ENCODE measurements at regions of chr16 and their contacts with region 1.

Region 1: GRCh38 chr16:88452482-88453216 is 431 bp upstream of the ZFPM1 start:
- DNase-seq: peak; percentile 91 to 95 (median 94)
- H3K4me3 ChIP-seq: peak overlapping the region; percentile 38 to 83 (median 65)
- H3K4me3 Mint-ChIP-seq: peak overlapping the region; percentile 79 to 87
- H3K27ac ChIP-seq: peak overlapping the region; percentile 58 to 75
- H3K27ac Mint-ChIP-seq: peak overlapping the region; percentile 57 to 94 (median 82)
- H3K4me1 ChIP-seq: peaks cover 46 to 60% of the 10 kb centered on the region in 2 donors
- H3K4me1 Mint-ChIP-seq: peaks cover 44% of the 10 kb centered on the region
- H3K27me3 ChIP-seq: peaks cover 27 to 59% of the 10 kb centered on the region in 2 donors
- H3K27me3 Mint-ChIP-seq: peaks cover 52 to 86% (median 57%) of the 10 kb centered on the region in 3 donors
- CTCF ChIP-seq: no peak

Region 2: DNA sequence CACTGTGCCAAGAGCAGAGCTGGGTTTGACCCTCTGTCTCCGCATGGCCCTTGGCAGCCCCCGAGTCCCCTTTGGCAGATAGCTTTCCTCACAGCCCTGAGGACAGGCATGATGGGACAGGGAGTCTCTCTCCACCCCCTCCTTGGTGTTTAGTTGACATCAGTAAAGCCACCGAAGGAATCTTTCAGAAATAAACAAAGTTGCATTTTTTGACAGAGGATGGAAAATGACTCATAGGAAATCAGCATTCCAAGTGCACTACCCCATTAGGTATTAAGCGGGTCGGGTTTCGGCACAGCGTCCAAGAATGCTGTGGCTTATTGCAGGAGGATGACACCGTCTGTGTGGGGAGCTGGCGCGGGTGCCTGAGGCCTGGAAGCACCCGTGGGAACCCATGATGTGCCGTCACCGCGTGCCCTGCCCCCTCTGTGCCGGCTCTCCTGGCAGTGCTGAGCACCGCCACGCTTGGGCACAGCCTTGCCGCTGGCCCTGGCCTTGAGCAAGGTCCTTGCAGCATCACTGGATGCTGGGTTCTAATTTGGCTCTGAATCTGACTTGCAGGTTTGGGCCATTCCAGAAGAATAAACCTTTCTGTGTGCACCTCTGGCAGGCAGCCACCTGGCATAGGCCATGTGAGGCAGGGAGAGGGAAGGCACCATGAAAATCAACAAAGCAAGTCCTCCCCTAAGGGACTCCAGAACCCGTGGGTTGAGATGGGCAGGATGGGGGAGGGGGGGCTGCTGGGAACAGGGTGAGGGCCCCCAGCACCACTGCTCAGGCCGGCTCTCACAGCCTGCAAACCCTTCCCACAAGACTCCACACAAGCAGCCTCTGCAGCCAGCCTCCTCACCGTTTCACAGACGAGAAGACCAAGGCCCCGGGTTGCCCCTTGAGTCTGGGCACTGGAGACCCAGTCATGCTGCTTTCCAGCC is 120.4 kb before region 1 on chr16:
- intact Hi-C with region 1: loop called in 1 of 2 experiments (anchors 5 kb)
- DNase-seq: no peak
- H3K4me3 ChIP-seq: peak overlapping the region in 2 of 3 experiments; percentile 39 to 59
- H3K4me3 Mint-ChIP-seq: peak overlapping the region; percentile 61 to 77
- H3K27ac ChIP-seq: no peak overlapping the region
- H3K27ac Mint-ChIP-seq: no peak overlapping the region
- H3K4me1 ChIP-seq: peaks cover 9 to 16% of the 10 kb centered on the region in 2 donors
- H3K4me1 Mint-ChIP-seq: peaks cover 11% of the 10 kb centered on the region
- H3K27me3 ChIP-seq: no peaks in the 10 kb centered on the region
- H3K27me3 Mint-ChIP-seq: peaks cover 1 to 4% (median 2%) of the 10 kb centered on the region in 3 donors
- CTCF ChIP-seq: no peak

Region 3: GRCh38 chr16:88533932-88534732 is 81.5 kb after region 1 on chr16:
- intact Hi-C with region 1: loop called in 1 of 2 experiments (anchors 2 kb)
- DNase-seq: peak; percentile 56 to 75 (median 64)
- H3K4me3 ChIP-seq: peak overlapping the region; percentile 12 to 73 (median 42)
- H3K4me3 Mint-ChIP-seq: peak overlapping the region; percentile 42 to 57
- H3K27ac ChIP-seq: peak overlapping the region in 1 of 2 donors; percentile 77
- H3K27ac Mint-ChIP-seq: no peak overlapping the region
- H3K4me1 ChIP-seq: peaks cover 9 to 10% of the 10 kb centered on the region in 2 donors
- H3K4me1 Mint-ChIP-seq: peaks cover 10% of the 10 kb centered on the region
- H3K27me3 ChIP-seq: peaks cover 0 to 1% of the 10 kb centered on the region in 2 donors
- H3K27me3 Mint-ChIP-seq: peaks cover 11 to 12% (median 12%) of the 10 kb centered on the region in 3 donors
- CTCF ChIP-seq: no peak